Left cardiac atrium (tissue), 4 donors: ENCODE measurements at regions of chr20 and their contacts with region 1.

Region 1: DNA sequence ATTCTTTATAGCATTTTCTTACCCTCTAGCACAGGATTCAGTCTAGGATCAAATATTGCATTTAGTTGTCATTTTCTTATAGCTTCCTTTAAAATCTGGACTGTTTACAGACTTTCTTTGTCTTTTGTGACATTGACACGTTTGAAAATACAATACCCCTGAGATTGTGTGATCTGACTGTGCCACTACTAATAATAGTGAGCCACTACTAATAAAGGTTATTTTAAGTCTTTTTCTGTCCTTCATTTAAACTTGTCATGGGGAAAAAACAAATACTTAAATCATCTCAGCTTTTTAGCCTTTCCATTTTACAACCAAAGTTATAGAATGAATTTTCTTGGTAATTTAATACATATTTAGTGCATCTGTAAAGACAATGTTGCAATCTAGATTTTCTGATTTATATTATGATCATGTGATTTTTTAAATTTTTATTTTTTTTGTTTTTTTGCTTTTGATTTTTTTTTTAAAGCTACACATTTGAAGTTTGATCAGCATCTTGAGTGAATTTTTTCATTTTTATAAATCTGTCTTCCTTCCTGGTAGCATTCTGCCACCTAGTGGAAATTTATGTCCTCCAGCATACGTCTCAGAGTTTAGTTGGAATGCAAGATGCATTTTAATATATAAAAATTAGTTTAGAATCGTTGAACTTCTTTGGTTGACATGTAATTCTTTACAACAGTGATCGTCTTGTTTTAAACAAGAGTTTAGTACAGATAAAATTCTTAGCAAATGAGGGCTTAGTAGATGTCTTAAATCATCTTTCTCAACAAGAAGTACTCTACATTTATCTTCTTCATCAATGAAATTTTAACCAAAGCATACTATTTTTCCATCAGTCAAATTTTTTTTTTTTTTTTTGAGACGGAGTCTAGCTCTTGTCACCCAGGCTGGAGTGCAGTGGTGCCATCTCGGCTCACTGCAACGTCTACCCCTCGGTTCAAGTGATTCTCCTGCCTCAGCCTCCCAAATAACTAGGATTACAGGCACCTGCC is 119.4 kb downstream of the NCOA3 start:
- DNase-seq: no peak
- ATAC-seq: peak in 1 of 2 donors; percentile 34

Region 2: GRCh38 chr20:47205577-47206498 is 415.3 kb before region 1 on chr20:
- intact Hi-C with region 1: loop called (anchors 5 to 10 kb)
- DNase-seq: peak; percentile 59
- ATAC-seq: peak; percentile 83 to 86

Region 3: DNA sequence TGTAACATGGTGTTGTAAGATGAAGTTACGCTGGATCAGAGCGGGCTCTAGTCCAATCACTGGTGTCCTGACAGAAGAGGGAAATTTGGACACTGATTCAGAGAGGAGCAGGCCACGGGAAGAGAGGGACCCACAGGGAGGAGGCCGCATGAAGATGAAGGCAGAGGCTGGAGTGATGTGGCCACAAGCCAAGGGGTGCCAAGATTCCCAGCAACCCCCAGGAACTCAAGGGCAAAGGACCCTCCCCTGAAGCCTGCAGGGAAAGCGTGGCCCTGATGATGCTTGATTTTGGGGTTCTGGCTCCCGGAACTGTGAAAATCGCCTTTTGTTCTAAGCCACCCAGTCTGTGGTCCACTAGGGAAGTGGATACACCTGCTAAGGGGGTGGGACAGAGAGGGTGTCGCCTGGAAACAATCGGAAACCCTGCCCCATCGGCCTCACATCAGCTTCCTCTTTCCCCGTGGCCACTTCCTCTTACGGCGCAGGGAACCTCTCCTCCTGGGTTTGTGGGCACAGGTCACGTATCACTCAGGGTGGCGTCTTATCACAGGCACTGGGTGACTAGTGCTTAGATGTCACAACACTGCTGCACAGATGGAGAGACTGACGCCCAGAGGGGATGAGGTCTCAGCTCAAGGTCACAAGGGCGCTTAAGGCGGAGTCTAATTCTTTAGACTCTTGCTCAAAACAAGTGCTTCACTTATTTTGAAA is 106.2 kb after region 1 on chr20:
- intact Hi-C with region 1: no loop called
- DNase-seq: peak; percentile 54
- ATAC-seq: peak; percentile 60 to 79